OCI-LY7 (cell line): ENCODE measurements at regions of chr2 and their contacts with region 1.

Region 1: GRCh38 chr2:80238692-80239469 is 65.7 kb downstream of the LRRTM1 start:
- DNase-seq: peak; percentile 29
- H3K4me3 ChIP-seq: no peak overlapping the region
- H3K27ac ChIP-seq: no peak overlapping the region
- H3K4me1 ChIP-seq: no peaks in the 10 kb centered on the region
- CTCF ChIP-seq: peak; percentile 84

Region 2: DNA sequence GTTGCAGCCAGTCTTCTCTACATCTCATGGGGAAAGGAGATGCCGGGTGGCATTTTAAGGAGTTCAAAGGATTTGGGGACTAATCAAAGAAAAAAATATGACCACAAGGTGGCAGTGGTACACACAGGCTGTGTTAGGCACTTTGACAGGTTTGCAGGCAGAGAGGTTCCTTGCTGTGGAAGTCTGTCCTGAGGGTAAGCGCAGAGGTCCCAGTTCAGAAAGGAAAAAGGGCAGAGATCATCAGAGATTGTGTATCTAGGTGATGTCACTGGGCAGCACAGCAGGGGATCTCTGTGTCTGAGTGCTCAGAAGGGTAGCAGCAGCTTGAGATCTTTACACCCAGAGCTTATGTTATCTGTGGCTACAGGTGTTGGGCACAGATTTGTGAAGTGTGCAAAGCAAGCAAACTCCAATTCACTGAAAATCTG is 165.7 kb before region 1 on chr2:
- CTCF ChIA-PET with region 1: no interaction called
- POLR2A ChIA-PET with region 1: no interaction called
- intact Hi-C with region 1: loop called (anchors 10 kb)
- DNase-seq: peak; percentile 58
- H3K4me3 ChIP-seq: no peak overlapping the region
- H3K27ac ChIP-seq: no peak overlapping the region
- H3K4me1 ChIP-seq: no peaks in the 10 kb centered on the region
- CTCF ChIP-seq: peak; percentile 78